ENCODE measurements at regions of chr19 and their contacts with region 1.

Region 1: GRCh38 chr19:17266975-17267788 is at the start of gene BABAM1:
- DNase-seq: peak; percentile 98
- ATAC-seq: peak; percentile 96
- H3K4me3 Mint-ChIP-seq: peak within 1 kb of the TSS; percentile 94
- H3K27ac Mint-ChIP-seq: peak within 1 kb of the TSS; percentile 85
- H3K4me1 Mint-ChIP-seq: peaks cover 11% of the 10 kb centered on the region
- H3K27me3 Mint-ChIP-seq: no peaks in the 10 kb centered on the region
- total RNA-seq, gene BABAM1: 109 to 132 TPM

Region 2: DNA sequence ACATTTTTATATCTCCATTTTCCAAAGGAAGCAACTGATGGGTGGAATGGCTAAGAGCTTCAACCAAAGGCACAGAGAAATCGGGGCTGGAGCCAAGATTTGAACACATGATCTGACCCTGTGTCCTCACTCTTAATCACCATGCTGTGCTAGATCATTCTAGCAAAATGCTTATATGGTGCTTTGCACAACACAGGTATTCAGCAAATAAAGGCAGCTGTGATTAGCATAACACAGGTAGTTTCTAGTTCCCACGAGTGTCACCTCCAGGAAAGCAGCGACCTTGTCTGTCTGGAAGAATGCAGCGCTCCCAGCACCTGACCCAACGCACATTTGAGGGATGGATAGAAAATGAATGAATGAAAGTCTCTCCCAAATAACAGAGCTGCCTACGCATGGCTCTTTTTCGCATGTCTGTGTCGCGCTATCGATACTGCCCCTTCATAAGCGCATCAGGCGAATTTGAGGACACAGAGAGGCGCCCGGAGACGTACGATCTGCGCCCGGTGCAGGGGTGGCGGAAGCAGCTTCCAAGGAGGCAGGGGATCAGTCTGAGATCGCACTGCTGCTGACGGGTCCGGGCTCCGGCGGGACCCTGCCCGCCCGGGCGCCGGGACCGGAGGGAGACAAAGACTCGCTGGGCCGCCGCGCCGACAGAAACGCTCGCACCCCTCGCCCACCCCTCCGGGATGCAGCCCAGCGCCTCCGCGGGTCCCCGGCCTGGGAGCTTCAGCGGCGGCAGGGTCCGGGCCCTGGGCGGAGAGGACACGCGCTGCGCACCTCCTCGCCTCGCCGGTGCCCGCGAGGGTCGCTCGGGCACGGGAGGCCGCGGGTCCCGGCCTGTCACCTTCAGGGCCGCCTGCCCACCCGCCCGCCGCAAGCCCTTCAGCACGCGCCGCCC is 796.0 kb before region 1 on chr19:
- CTCF ChIA-PET with region 1: no interaction called
- POLR2A ChIA-PET with region 1: no interaction called
- intact Hi-C with region 1: loop called in 1 of 2 experiments (anchors 10 kb)
- DNase-seq: peak; percentile 60
- ATAC-seq: peak; percentile 20
- H3K4me3 Mint-ChIP-seq: peak overlapping the region; percentile 85
- H3K27ac Mint-ChIP-seq: peak overlapping the region; percentile 72
- H3K4me1 Mint-ChIP-seq: peaks cover 37% of the 10 kb centered on the region
- H3K27me3 Mint-ChIP-seq: peaks cover 2% of the 10 kb centered on the region

Region 3: GRCh38 chr19:16659831-16660708 is 607.1 kb before region 1 on chr19 and contains the start of gene SMIM7:
- CTCF ChIA-PET with region 1: no interaction called
- POLR2A ChIA-PET with region 1: no interaction called
- intact Hi-C with region 1: loop called in 1 of 2 experiments (anchors 1 kb)
- DNase-seq: peak; percentile 99
- ATAC-seq: peak; percentile 99
- H3K4me3 Mint-ChIP-seq: peak within 1 kb of the TSS; percentile 99
- H3K27ac Mint-ChIP-seq: peak within 1 kb of the TSS; percentile 94
- H3K4me1 Mint-ChIP-seq: peaks cover 34% of the 10 kb centered on the region
- H3K27me3 Mint-ChIP-seq: peaks cover 4% of the 10 kb centered on the region
- total RNA-seq, gene SMIM7: 46.5 to 52.2 TPM

Region 4: DNA sequence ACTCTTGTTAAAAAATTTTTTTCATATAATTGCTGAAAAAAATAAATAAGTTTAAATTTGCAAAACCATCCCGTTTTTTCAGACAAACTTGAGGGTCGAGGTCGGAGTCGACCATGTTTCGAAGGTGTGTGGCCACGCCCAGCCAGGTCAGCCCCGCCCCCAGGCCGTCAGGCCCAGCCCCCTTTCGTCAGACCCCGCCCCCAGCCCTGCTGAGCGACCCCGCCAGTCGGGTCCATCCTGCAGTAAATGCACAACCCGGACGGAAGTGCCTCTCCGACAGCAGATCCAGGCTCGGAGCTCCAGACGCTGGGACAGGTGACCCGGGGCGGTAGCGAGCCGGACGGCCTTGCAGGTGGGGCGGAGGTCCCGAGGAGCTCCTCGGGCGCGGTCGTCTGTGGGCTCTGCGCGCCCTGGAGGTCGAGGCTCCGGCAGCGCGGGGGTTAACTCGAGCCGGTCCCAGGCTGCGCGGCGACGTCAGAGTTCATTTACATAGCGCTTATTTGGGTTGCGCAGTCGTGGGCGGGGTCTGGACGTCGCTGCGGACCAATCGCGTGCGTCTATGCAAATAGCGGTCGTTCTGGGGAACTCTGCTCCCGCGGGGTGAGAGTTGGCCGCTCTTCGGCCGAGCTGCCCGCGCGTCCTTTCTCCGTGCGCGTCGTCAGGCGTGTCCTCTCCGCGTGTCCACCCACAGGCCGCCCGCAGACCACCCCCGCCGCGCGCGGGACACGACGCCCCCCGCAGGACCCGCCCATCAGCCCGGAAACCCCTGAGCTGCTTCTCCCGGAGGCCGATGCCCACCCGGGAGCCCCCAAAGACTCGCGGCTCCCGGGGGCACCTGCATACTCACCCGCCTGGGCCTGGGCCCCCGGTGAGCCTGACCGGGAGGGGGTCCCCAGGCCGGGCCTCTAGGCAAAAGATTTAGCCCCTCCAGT is 40.9 kb before region 1 on chr19 and contains the start of gene OCEL1:
- CTCF ChIA-PET with region 1: no interaction called
- POLR2A ChIA-PET with region 1: interaction called, 4 read pairs
- intact Hi-C with region 1: loop called (anchors 1 kb)
- DNase-seq: peak; percentile 99
- ATAC-seq: peak; percentile 92
- H3K4me3 Mint-ChIP-seq: peak within 1 kb of the TSS; percentile 80
- H3K27ac Mint-ChIP-seq: peak within 1 kb of the TSS; percentile 93
- H3K4me1 Mint-ChIP-seq: peaks cover 7% of the 10 kb centered on the region
- H3K27me3 Mint-ChIP-seq: no peaks in the 10 kb centered on the region
- total RNA-seq, gene OCEL1: 10.9 to 11.7 TPM

Region 5: GRCh38 chr19:17282488-17283255 is 15.5 kb after region 1 on chr19:
- CTCF ChIA-PET with region 1: interaction called, 45 read pairs
- POLR2A ChIA-PET with region 1: interaction called, 6 read pairs
- intact Hi-C with region 1: loop called in 1 of 2 experiments (anchors 1 kb)
- DNase-seq: peak; percentile 90
- ATAC-seq: peak; percentile 96
- H3K4me3 Mint-ChIP-seq: peak overlapping the region; percentile 73
- H3K27ac Mint-ChIP-seq: peak overlapping the region; percentile 59
- H3K4me1 Mint-ChIP-seq: peaks cover 8% of the 10 kb centered on the region
- H3K27me3 Mint-ChIP-seq: peaks cover 3% of the 10 kb centered on the region

Region 6: GRCh38 chr19:17390665-17391370 is 123.6 kb after region 1 on chr19:
- CTCF ChIA-PET with region 1: interaction called, 6 read pairs
- POLR2A ChIA-PET with region 1: no interaction called
- intact Hi-C with region 1: loop called in 1 of 2 experiments (anchors 1 kb)
- DNase-seq: peak; percentile 97
- ATAC-seq: peak; percentile 98
- H3K4me3 Mint-ChIP-seq: peak overlapping the region; percentile 83
- H3K27ac Mint-ChIP-seq: peak overlapping the region; percentile 33
- H3K4me1 Mint-ChIP-seq: peaks cover 24% of the 10 kb centered on the region
- H3K27me3 Mint-ChIP-seq: peaks cover 4% of the 10 kb centered on the region

Region 7: GRCh38 chr19:17488593-17489391 is 221.6 kb after region 1 on chr19:
- CTCF ChIA-PET with region 1: no interaction called
- POLR2A ChIA-PET with region 1: no interaction called
- intact Hi-C with region 1: no loop called
- DNase-seq: peak; percentile 45
- ATAC-seq: peak; percentile 84
- H3K4me3 Mint-ChIP-seq: no peak overlapping the region
- H3K27ac Mint-ChIP-seq: no peak overlapping the region
- H3K4me1 Mint-ChIP-seq: peaks cover 3% of the 10 kb centered on the region
- H3K27me3 Mint-ChIP-seq: no peaks in the 10 kb centered on the region

Measured in activated CD4-positive, alpha-beta T cell treated with anti-CD3 and anti-CD28 coated beads for 36 hours (primary cell).